Natural killer cell (primary cell): ENCODE measurements at regions of chr6 and their contacts with region 1.

Region 1: DNA sequence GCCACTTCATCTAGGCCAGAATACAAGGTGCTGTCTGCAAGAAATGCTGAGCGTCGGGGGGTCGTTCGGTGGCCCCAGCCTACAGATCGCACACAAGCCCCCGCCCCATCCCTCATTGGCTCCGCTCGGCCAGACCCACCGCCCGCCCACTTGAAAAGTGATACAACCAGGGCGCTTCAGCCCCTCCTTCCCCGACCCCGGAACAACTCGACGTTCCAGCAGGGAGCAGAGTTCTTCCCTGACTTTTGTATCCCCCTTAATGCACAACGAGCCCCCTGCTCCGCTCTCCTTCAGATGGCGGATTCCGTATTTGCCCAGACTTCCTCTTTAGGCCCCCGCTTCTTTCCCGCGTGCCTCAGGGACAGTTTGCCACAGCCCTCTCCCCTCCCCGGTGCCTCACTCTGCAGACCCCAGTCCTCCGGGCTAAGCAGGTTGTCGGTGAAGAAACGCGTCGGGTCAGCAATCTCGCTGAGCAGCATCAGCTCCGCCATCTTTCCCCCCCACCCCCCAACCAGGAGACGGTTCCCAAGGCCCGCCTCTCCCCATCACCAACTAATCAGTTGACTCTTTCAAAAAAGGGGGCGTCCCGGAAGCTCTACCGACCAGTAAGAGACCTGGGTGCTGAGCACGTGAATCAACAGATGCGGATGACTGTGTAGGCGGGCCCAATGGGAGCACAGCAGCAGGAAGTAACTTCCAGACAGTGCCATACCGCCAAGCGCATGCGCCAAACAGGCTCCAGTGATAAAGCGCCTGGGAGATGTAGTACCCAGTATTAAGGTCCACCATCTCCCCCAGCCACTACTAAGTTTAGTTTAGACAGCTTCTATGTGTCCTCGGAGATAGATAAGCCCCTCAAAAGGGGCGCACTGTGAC is at the start of gene ATF6B:
- DNase-seq: peak; percentile 91 to 100
- ATAC-seq: peak; percentile 92 to 99 (median 96)
- H3K4me3 ChIP-seq: peak within 1 kb of the TSS; percentile 98
- H3K4me3 Mint-ChIP-seq: peak within 1 kb of the TSS; percentile 94
- H3K27ac ChIP-seq: peak within 1 kb of the TSS; percentile 85
- H3K27ac Mint-ChIP-seq: peak within 1 kb of the TSS; percentile 93 to 98
- H3K4me1 ChIP-seq: peaks cover 37% of the 10 kb centered on the region
- H3K4me1 Mint-ChIP-seq: peaks cover 51 to 56% of the 10 kb centered on the region in 2 donors
- H3K27me3 ChIP-seq: no peaks in the 10 kb centered on the region
- H3K27me3 Mint-ChIP-seq: no peaks in the 10 kb centered on the region
- CTCF ChIP-seq: no peak
- total RNA-seq, gene ATF6B: 157 to 187 (median 178) TPM

Region 2: GRCh38 chr6:32148289-32149091 is 20.5 kb after region 1 on chr6:
- intact Hi-C with region 1: loop called (anchors 2 kb)
- DNase-seq: peak; percentile 78 to 86
- ATAC-seq: peak; percentile 90 to 94 (median 94)
- H3K4me3 ChIP-seq: peak overlapping the region; percentile 29
- H3K4me3 Mint-ChIP-seq: peak overlapping the region; percentile 91
- H3K27ac ChIP-seq: peak overlapping the region; percentile 8
- H3K27ac Mint-ChIP-seq: peak overlapping the region; percentile 80 to 91
- H3K4me1 ChIP-seq: peaks cover 32% of the 10 kb centered on the region
- H3K4me1 Mint-ChIP-seq: peaks cover 32 to 52% of the 10 kb centered on the region in 2 donors
- H3K27me3 ChIP-seq: peaks cover 21% of the 10 kb centered on the region
- H3K27me3 Mint-ChIP-seq: peaks cover 20 to 37% of the 10 kb centered on the region in 2 donors
- CTCF ChIP-seq: peak; percentile 50